Mammary epithelial cell (primary cell): ENCODE measurements at regions of chr2 and their contacts with region 1.

Region 1: DNA sequence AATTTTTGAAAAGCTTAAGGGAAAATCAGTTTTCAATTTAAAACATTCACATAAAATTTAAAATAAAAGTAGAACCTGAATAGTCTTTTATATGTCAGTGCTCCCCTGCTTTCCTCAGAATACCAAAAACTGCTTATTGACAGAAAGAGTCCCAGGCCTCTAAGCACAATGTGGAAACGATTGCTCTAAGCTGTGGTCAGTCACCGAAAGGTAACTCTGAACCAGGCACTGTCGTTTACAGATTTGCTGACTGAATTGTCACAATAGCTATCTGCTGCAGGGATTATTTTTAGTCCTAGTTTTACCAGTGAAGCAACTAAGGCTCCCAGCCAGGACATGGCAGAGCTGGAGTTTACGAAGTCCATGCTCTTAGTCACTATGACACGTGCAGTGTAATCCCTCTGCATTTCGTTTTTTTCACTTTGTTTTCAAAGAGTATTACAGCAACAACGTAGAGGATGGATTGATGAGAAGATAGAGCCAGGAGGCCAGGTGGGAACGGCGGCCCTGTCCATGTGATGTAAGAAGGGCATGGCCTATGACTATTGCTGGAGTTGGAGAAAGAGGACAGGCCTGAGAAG is 28.1 kb upstream of the TMEM247 start:
- DNase-seq: peak; percentile 47
- H3K4me3 ChIP-seq: no peak overlapping the region
- H3K27ac ChIP-seq: no peak overlapping the region
- H3K4me1 ChIP-seq: no peaks in the 10 kb centered on the region
- H3K27me3 ChIP-seq: no peaks in the 10 kb centered on the region
- CTCF ChIP-seq: no peak

Region 2: GRCh38 chr2:46010925-46011490 is 440.2 kb before region 1 on chr2:
- CTCF ChIA-PET with region 1: interaction called, 30 read pairs
- dilution Hi-C with region 1: no loop called
- in situ Hi-C with region 1: no loop called
- intact Hi-C with region 1: no loop called
- DNase-seq: peak; percentile 37
- H3K4me3 ChIP-seq: no peak overlapping the region
- H3K27ac ChIP-seq: no peak overlapping the region
- H3K4me1 ChIP-seq: peaks cover 36% of the 10 kb centered on the region
- H3K27me3 ChIP-seq: no peaks in the 10 kb centered on the region
- CTCF ChIP-seq: peak; percentile 62 to 69

Region 3: GRCh38 chr2:46481198-46482193 is 30.3 kb after region 1 on chr2:
- CTCF ChIA-PET with region 1: no interaction called
- dilution Hi-C with region 1: no loop called
- in situ Hi-C with region 1: no loop called
- intact Hi-C with region 1: no loop called
- DNase-seq: peak; percentile 66
- H3K4me3 ChIP-seq: no peak overlapping the region
- H3K27ac ChIP-seq: no peak overlapping the region
- H3K4me1 ChIP-seq: peaks cover 4% of the 10 kb centered on the region
- H3K27me3 ChIP-seq: no peaks in the 10 kb centered on the region
- CTCF ChIP-seq: no peak